ENCODE measurements at regions of chr10 and their contacts with region 1.

Region 1: GRCh38 chr10:3197348-3198003 is 24.9 kb upstream of the PITRM1 start:
- DNase-seq: peak; percentile 77
- H3K4me3 Mint-ChIP-seq: peak overlapping the region; percentile 49
- H3K27ac Mint-ChIP-seq: peak overlapping the region; percentile 56
- H3K4me1 Mint-ChIP-seq: peaks cover 18% of the 10 kb centered on the region
- H3K27me3 Mint-ChIP-seq: peaks cover 85% of the 10 kb centered on the region

Region 2: DNA sequence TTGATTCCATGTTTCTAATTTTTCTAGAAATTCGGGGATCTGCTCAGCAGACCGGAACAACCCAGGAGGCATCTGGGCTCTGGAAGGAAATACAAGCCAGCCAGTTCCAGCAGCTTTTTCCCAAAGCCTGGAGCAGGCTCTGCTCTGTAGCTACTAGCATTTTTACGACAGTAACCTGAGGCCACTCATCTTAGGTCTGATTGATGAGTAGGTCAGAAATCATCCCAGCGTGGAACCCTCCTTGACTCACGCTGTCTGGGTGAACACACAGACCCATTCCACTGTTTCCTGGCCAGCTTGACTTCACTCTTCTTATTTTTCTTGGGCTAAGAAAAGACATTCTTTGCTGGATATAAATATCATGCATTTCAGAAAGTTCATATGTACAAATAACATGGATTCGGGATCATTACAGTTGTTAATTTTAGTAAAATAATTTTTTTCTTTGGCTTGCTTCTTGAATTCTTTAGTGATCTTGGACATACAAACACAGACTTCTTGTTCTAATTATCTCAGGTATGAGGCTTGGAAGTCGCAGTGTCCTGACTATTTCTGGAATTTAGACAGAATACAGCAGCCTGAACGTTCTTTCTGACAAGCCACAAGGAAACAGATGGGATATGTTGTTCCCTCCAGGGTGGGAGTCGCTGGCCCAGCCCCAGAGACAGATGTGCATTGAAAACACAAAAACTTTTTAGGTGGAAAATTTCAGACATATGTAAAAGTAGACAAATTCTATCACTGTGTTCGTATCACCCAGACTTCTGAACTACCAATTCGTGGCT is 29.7 kb after region 1 on chr10:
- intact Hi-C with region 1: loop called (anchors 1 kb)
- DNase-seq: no peak
- H3K4me3 Mint-ChIP-seq: no peak overlapping the region
- H3K27ac Mint-ChIP-seq: no peak overlapping the region
- H3K4me1 Mint-ChIP-seq: peaks cover 15% of the 10 kb centered on the region
- H3K27me3 Mint-ChIP-seq: peaks cover 26% of the 10 kb centered on the region

Region 3: DNA sequence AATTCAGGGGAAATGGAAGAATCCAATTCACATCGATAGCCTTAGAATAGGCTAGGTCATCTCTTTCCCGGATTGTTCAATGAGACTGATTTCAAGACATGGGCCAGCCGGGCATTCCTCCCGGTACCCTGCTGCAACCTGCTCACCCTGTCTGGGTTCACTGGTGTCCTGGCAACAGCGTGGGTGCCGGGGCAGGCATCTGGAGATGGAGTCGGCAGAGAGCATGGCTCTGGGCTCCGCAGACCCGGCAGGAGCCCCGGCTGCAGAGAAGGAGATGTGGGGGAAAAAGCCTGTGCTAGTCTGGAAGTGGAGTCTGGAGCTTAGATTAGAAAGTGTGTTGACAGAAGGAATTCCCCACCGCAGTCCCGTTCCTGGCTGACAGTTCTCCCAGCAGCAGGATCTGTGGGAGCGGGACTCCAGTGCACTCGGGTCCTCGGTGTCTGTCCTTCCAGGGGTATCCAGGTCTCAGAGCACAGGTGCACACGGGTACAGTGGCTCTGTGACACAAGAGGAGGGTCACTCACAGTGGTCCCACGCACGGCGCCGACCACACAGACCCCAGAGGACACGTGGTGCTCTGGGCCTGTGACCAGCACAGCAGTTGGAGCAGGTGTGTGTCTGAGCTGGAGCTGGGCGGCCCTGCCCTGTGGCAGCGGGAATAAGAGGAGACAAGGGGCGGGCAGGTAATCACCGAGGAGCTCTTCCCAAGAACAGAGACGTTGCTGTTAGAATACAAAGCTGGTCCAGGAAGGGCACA is 40.8 kb after region 1 on chr10:
- intact Hi-C with region 1: no loop called
- DNase-seq: no peak
- H3K4me3 Mint-ChIP-seq: no peak overlapping the region
- H3K27ac Mint-ChIP-seq: no peak overlapping the region
- H3K4me1 Mint-ChIP-seq: no peaks in the 10 kb centered on the region
- H3K27me3 Mint-ChIP-seq: peaks cover 53% of the 10 kb centered on the region

Region 4: DNA sequence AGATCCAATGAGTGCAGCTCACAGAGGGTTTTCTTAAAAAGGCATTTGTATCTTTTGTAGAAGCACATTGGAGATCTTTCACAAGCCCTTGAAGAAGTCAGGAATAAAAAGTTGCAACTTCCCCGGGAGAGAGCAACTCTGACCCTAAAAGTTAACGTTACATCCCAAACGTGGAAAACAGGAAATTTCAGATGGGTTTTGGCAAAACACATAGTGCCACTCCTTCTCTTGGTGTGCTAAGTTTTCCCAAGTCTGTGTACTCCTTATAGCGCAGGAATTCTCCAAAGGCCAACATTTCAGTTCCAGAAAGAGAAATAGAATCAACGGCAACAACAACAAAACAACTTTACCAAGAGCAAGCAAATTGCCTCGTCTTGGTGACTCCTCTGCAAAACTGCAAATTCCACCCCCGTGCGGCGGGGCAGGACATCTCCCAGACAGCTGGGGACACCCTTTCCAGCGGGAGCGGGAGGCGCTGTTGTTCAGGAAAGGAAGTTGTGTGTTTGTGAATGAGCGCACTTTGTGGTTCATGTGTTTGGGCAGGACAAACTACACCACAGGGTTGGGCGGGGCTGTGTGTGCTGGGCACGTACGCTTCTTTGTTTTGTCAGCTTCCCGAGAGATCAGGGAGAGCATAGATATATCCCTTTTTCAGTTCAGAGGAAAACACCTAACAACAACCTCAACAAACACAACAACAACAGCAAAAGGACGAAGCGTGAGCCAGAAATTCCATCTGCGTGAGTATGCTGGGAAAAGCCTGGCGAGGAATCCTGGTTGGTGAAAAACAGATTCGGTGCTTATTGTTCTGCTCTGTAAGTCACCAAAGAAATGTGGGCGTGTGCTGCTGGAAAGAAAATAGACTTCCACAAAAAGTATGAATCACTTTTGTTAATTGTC is 269.8 kb after region 1 on chr10:
- intact Hi-C with region 1: loop called (anchors 5 kb)
- DNase-seq: no peak
- H3K4me3 Mint-ChIP-seq: peak overlapping the region; percentile 73
- H3K27ac Mint-ChIP-seq: peak overlapping the region; percentile 92
- H3K4me1 Mint-ChIP-seq: peaks cover 63% of the 10 kb centered on the region
- H3K27me3 Mint-ChIP-seq: no peaks in the 10 kb centered on the region

Region 5: DNA sequence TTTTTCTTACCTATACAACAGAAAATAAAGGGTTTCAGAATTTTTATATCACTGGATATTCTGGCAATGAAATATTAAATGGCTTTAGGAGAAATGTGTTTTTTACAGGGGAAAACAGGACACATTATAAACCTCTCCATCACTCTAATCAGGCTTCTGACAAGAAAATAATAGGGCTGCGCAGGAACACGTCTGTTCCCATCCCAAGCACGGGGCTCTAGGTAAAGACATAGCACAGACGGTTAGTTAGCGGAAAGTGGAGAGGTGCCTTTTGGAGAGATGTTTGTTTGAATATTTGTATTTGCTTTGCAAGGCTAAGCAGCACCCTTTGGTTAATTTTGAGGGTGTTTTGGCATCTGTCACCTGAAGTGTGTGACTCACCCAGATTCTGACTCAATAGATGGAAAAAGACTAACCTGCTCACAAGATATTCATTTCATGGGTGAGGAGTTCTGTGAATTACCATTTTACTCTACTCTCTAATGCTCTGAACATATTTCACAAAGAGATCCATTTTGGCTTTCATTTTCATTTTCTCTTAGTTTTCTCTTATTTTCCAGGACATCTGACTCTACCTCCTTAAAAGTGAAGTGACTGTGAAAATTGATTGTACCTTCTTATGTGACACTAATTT is 1454.0 kb after region 1 on chr10:
- intact Hi-C with region 1: loop called (anchors 2 kb)
- DNase-seq: no peak
- H3K4me3 Mint-ChIP-seq: no peak overlapping the region
- H3K27ac Mint-ChIP-seq: peak overlapping the region; percentile 83
- H3K4me1 Mint-ChIP-seq: peaks cover 25% of the 10 kb centered on the region
- H3K27me3 Mint-ChIP-seq: peaks cover 12% of the 10 kb centered on the region

Region 6: GRCh38 chr10:4767033-4767814 is 1569.7 kb after region 1 on chr10:
- intact Hi-C with region 1: loop called (anchors 5 kb)
- DNase-seq: no peak
- H3K4me3 Mint-ChIP-seq: no peak overlapping the region
- H3K27ac Mint-ChIP-seq: no peak overlapping the region
- H3K4me1 Mint-ChIP-seq: no peaks in the 10 kb centered on the region
- H3K27me3 Mint-ChIP-seq: peaks cover 29% of the 10 kb centered on the region

Measured in activated T-helper 2 cell treated with anti-CD3 and anti-CD28 coated beads, Interferon-gamma antibody, Interleukin-2, Interleukin-4, amounts not matched to agents 10 μg/mL and 5 μg/mL and 100 μg/mL, durations not matched to agents 14 hours and 24 hours and 36 hours (primary cell).